ENCODE measurements at regions of chr14 and their contacts with region 1.

Region 1: DNA sequence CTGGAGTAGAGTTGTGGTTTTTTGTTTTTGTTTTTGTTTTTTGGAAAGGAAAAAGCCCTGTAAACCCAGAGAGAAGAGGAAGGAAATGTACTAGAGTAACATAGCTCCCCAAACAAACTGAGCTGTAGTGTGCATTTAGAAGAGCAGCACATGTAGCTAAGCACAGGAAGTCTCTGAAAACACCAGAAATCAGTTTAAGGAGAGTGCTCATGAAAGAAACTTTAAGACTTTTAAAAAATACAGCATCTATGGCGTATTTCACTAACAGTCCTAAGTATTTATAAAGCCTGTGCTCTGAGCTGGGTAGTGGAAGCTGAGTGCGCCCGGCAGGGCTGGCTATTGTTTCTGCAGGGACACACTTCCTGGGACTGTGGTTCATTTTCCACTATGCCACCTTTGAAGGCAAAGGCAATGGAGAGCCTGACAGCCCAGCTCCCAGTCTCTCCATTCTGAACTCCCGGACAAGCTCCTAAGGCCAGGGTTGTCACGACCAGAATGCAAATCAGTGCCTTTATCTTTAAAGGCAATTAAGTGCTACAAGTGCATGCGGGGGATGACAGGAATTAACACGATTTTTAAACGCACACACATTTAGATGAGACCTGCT is 45.4 kb downstream of the NIN start:
- DNase-seq: no peak

Region 2: DNA sequence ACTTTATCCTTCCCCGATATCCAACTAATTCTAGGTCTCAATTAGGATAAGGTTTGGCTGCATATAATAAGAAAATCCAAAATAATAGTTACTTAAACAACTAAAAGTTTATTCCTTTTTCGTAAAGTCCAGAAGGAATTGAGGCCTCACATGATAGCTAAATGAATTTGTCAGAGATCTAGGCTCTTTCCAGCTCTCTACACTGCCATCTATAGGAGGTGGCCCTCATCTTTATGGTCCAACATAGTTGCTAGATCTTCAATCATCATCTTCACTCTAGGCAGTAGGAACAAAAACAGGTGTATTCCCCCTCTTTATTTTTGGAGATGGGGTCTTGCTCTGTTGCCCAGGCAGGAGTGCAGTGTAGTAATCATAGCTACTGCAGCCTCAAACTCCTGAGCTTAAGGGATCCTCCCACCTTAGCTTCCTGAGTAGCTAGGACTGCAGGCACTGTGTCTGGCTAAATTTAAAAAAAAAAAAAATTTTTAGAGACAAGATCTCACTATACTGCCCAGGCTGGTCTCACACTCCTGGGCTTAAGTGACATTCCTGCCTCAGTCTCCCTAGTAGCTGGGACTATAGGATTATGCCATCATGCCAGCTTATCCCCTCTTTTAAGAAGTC is 71.0 kb before region 1 on chr14:
- intact Hi-C with region 1: no loop called
- DNase-seq: no peak

Region 3: GRCh38 chr14:50798048-50798421 is 12.5 kb after region 1 on chr14:
- intact Hi-C with region 1: loop called (anchors 1 kb)
- DNase-seq: no peak

Region 4: GRCh38 chr14:50860478-50861086 is 75.0 kb after region 1 on chr14:
- intact Hi-C with region 1: loop called (anchors 10 kb)
- DNase-seq: peak; percentile 71 to 96 (median 85)

Region 5: DNA sequence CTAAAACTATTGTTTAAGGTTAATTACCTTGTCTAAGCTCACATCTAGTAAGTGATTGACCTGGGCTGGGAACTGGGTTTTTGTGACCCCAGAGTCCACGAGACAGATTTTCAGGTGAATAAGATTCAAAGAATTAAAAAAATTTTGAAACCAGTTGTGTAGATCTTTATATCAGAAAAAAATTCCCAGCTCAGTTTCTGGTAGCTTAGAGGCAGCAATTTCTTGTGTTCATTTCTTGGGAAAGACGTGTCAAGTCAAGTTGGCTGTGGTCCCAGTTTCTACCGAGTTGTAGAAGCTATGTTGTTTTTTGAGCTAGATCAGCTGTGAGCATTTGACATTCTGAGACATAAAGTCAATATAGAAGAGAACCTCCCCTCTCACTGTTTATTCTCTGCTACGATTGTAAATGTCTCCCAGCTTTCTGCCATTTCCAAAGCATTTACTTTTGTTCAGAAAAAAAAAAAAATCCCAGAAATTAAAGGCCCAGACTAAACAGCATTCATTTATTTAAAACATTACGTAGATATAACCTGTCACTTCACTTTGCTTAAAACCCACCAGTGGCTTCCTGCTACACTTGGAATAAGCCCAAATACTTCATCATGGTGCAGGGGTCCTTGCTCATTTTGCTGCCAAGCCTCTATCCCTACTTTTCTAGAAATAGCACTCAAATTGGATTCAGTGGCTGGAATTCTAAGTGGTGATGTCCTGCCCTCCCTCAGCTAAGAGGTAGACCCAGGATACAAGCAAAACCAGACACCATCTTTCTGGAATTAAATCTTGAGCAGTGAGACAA is 179.2 kb after region 1 on chr14:
- intact Hi-C with region 1: no loop called
- DNase-seq: peak in 2 of 10 donors; percentile 37 to 40